ENCODE measurements at regions of chr12 and their contacts with region 1.

Region 1: GRCh38 chr12:8108808-8109398 is 14.5 kb upstream of the CLEC4A start:
- DNase-seq: peak; percentile 11 to 50
- ATAC-seq: peak; percentile 60 to 64
- H3K4me3 ChIP-seq: no peak overlapping the region
- H3K27ac ChIP-seq: no peak overlapping the region
- H3K4me1 ChIP-seq: no peaks in the 10 kb centered on the region
- H3K27me3 ChIP-seq: no peaks in the 10 kb centered on the region
- CTCF ChIP-seq: peak; percentile 72 to 95 (median 92)
- POLR2A ChIP-seq: no peak

Region 2: DNA sequence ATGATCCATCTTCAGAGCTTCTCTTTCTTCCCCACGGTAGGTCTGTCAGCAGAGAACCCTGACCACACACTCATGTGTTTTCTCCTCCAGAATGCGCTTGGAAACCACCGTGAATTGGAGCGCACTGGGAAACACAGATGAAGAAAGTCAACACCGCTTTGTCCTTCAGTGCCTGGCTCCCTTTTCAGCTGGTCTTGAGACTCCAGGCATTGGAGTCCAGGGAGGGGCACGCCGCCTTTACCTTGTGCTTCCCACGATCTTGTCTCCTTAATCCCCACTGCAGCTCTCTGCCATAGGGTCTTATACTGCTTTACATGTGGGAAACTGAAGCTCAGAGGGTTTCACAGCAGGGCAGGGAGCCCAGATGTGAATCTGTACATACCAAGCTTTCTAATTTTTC is 117.5 kb after region 1 on chr12:
- in situ Hi-C with region 1: loop called in 3 of 4 experiments (anchors 25 kb)
- intact Hi-C with region 1: no loop called
- DNase-seq: no peak
- ATAC-seq: no peak
- H3K4me3 ChIP-seq: no peak overlapping the region
- H3K27ac ChIP-seq: no peak overlapping the region
- H3K4me1 ChIP-seq: no peaks in the 10 kb centered on the region
- H3K27me3 ChIP-seq: no peaks in the 10 kb centered on the region
- CTCF ChIP-seq: no peak
- POLR2A ChIP-seq: no peak

Measured in gastrocnemius medialis (tissue), 4 donors.